Activated naive CD4-positive, alpha-beta T cell treated with anti-CD3 and anti-CD28 coated beads, Interleukin-2, amount 10 ng/mL, durations not matched to agents 7 days and 5 days (primary cell): ENCODE measurements at regions of chr3 and their contacts with region 1.

Region 1: DNA sequence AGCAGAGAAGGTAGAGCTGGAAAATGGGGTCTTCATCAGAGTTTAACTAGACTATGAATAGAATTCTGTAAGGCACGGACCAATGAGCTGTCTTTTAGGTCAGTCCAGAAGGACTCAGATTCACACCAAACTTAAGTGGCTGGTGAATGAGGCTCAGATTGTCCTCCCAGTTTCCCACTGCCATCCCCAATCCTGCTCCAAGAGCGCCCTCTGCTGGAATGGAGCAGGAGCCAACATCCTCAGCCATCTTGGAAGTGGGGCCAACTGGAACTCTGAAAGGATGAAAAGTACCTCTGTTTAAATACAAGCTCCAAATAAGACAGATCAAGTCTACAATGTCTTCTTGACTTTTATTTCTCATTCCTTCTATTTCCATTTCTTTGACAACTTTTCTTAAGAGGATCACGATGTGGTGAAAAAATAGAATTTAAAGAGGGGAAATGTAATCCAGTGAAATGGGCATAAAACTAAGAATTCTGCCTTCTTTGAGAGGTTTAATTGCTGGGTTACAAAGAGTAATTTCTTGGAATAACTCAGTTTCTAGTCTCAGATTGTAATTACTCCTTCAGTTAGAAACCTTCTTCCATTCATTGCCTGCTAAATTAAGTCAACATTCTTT is 217.1 kb upstream of the TPRG1 start:
- DNase-seq: peak; percentile 85
- H3K4me3 Mint-ChIP-seq: no peak overlapping the region
- H3K27ac Mint-ChIP-seq: peak overlapping the region; percentile 37
- H3K4me1 Mint-ChIP-seq: peaks cover 22% of the 10 kb centered on the region
- H3K27me3 Mint-ChIP-seq: peaks cover 6% of the 10 kb centered on the region

Region 2: GRCh38 chr3:188749010-188749617 is 205.6 kb before region 1 on chr3:
- CTCF ChIA-PET with region 1: interaction called, 11 read pairs
- DNase-seq: peak; percentile 68
- H3K4me3 Mint-ChIP-seq: no peak overlapping the region
- H3K27ac Mint-ChIP-seq: no peak overlapping the region
- H3K4me1 Mint-ChIP-seq: peaks cover 3% of the 10 kb centered on the region
- H3K27me3 Mint-ChIP-seq: no peaks in the 10 kb centered on the region

Region 3: GRCh38 chr3:188830893-188831292 is 123.8 kb before region 1 on chr3:
- CTCF ChIA-PET with region 1: interaction called, 25 read pairs
- DNase-seq: no peak
- H3K4me3 Mint-ChIP-seq: no peak overlapping the region
- H3K27ac Mint-ChIP-seq: no peak overlapping the region
- H3K4me1 Mint-ChIP-seq: peaks cover 14% of the 10 kb centered on the region
- H3K27me3 Mint-ChIP-seq: no peaks in the 10 kb centered on the region

Region 4: GRCh38 chr3:188914552-188914951 is 40.1 kb before region 1 on chr3:
- CTCF ChIA-PET with region 1: interaction called, 22 read pairs
- DNase-seq: no peak
- H3K4me3 Mint-ChIP-seq: no peak overlapping the region
- H3K27ac Mint-ChIP-seq: peak overlapping the region; percentile 64
- H3K4me1 Mint-ChIP-seq: peaks cover 42% of the 10 kb centered on the region
- H3K27me3 Mint-ChIP-seq: no peaks in the 10 kb centered on the region

Region 5: DNA sequence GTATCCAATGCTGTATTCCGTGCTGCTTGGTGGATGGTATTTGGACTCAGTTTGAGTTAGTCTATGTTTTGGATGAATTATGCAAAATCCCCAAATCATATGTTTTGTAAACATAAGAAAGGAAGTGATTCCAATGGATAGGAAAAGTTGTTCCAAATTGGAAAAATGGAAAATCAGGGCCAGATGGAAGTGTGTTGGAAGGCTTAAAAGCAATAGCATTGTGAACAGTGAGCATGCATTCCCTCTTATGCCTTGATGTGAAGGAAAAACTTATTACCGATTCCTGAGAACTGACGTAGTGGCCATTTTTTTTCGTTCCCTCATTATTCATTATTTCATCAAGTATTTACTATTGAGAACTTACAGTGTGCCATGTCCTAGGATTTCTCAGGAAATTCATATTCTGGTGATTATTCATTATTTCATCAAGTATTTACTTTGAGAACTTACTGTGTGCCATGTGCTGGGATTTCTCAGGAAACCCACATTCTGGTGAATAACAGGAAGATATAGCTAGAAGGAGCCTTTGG is 73.0 kb after region 1 on chr3:
- CTCF ChIA-PET with region 1: no interaction called
- DNase-seq: no peak
- H3K4me3 Mint-ChIP-seq: no peak overlapping the region
- H3K27ac Mint-ChIP-seq: no peak overlapping the region
- H3K4me1 Mint-ChIP-seq: no peaks in the 10 kb centered on the region
- H3K27me3 Mint-ChIP-seq: peaks cover 30% of the 10 kb centered on the region

Region 6: DNA sequence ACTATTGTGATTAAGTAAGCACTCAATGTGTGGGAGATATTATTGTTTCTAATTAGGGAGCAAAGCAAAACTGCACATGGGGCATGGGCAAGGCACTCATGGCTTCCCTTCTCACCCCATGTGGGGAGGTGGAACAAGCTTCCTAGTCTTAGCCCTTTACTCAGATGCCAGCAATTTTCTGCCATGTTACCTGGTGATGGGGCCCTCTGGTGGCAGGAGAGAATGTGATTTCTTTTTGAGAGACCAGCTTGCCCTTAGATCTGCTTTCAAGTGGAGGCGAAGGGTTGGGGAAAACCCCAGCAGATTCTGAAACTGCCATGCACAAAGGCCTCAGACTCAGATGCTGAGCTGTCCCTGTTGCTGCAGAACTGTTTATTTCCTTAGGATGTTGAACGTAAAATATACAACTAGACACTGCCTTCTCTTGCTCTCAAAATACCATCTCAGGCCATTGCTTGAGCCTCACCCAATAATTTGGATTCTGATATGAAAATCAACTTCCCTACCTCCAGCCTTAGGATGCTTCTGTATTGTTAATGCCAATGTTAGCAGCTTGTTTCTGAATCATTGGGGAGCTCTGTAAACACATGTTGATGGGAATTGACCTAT is 86.9 kb after region 1 on chr3:
- CTCF ChIA-PET with region 1: interaction called, 44 read pairs
- DNase-seq: peak; percentile 86
- H3K4me3 Mint-ChIP-seq: no peak overlapping the region
- H3K27ac Mint-ChIP-seq: peak overlapping the region; percentile 35
- H3K4me1 Mint-ChIP-seq: peaks cover 47% of the 10 kb centered on the region
- H3K27me3 Mint-ChIP-seq: no peaks in the 10 kb centered on the region

Region 7: GRCh38 chr3:189148081-189148507 is 193.4 kb after region 1 on chr3:
- CTCF ChIA-PET with region 1: interaction called, 151 read pairs
- DNase-seq: peak; percentile 79
- H3K4me3 Mint-ChIP-seq: no peak overlapping the region
- H3K27ac Mint-ChIP-seq: no peak overlapping the region
- H3K4me1 Mint-ChIP-seq: peaks cover 37% of the 10 kb centered on the region
- H3K27me3 Mint-ChIP-seq: peaks cover 7% of the 10 kb centered on the region